B cell (primary cell): ENCODE measurements at regions of chr16 and their contacts with region 1.

Region 1: DNA sequence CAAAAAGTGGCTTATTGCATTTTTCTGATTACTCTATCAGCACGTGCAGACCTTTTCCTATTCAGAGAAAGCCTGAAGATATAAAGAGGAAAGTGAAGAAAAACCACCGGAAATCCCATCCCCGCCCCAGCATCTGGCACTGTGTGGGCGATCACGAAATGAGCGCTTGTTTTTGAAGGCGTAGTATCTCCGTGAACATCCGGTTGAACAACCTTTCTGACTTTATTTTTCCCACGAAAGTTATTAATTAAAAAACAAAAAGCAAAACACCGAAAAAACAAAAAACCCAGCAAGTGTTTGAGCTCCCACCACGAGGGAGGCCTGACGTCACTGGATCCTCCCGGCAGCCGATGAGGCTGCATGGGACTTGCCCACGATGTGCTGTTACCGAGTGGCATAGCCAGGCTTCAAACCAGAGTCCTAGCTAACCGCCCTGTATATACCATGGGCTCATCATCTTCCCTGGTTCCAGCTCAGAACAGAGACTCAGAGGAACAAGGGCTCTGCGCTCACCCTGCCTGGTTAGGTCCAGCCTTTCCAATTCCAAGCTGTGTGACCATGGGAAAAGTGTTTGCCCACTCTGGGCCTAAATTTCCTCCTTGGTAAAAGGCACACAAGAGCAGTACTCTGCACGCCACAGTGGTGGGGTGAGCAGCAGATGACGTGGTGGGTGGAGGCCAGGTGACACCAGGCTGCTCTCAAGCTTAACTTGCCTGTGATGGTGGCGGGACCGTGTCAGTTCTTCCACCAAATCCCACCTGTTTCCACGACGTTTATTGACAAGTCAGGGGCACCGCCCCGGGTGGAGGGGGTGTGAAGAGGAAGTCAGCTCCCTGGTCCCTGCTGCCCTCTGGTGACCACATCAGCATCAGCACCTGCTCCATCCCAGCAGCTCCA is 34.3 kb upstream of the IL21R start:
- DNase-seq: peak; percentile 95
- ATAC-seq: peak; percentile 77
- H3K4me3 ChIP-seq: peak overlapping the region; percentile 11 to 42 (median 30)
- H3K4me3 Mint-ChIP-seq: peak overlapping the region; percentile 78
- H3K27ac ChIP-seq: peak overlapping the region; percentile 97
- H3K27ac Mint-ChIP-seq: peak overlapping the region; percentile 96
- H3K4me1 ChIP-seq: peaks cover 36 to 57% of the 10 kb centered on the region in 2 donors
- H3K4me1 Mint-ChIP-seq: peaks cover 57% of the 10 kb centered on the region
- H3K27me3 ChIP-seq: no peaks in the 10 kb centered on the region
- H3K27me3 Mint-ChIP-seq: no peaks in the 10 kb centered on the region
- CTCF ChIP-seq: peak; percentile 85

Region 2: GRCh38 chr16:27154705-27155521 is 212.8 kb before region 1 on chr16:
- CTCF ChIA-PET with region 1: interaction called, 65 read pairs
- POLR2A ChIA-PET with region 1: interaction called, 3 read pairs
- intact Hi-C with region 1: loop called (anchors 1 kb)
- DNase-seq: peak; percentile 75
- ATAC-seq: peak; percentile 91
- H3K4me3 ChIP-seq: no peak overlapping the region
- H3K4me3 Mint-ChIP-seq: no peak overlapping the region
- H3K27ac ChIP-seq: no peak overlapping the region
- H3K27ac Mint-ChIP-seq: no peak overlapping the region
- H3K4me1 ChIP-seq: peaks cover 9 to 11% of the 10 kb centered on the region in 2 donors
- H3K4me1 Mint-ChIP-seq: peaks cover 13% of the 10 kb centered on the region
- H3K27me3 ChIP-seq: no peaks in the 10 kb centered on the region
- H3K27me3 Mint-ChIP-seq: no peaks in the 10 kb centered on the region
- CTCF ChIP-seq: peak; percentile 99

Region 3: GRCh38 chr16:27225536-27226360 is 142.0 kb before region 1 on chr16:
- CTCF ChIA-PET with region 1: interaction called, 67 read pairs
- POLR2A ChIA-PET with region 1: interaction called, 4 read pairs
- intact Hi-C with region 1: no loop called
- DNase-seq: no peak
- ATAC-seq: no peak
- H3K4me3 ChIP-seq: no peak overlapping the region
- H3K4me3 Mint-ChIP-seq: peak overlapping the region; percentile 12
- H3K27ac ChIP-seq: no peak overlapping the region
- H3K27ac Mint-ChIP-seq: peak overlapping the region; percentile 75
- H3K4me1 ChIP-seq: peaks cover 37 to 51% of the 10 kb centered on the region in 2 donors
- H3K4me1 Mint-ChIP-seq: peaks cover 42% of the 10 kb centered on the region
- H3K27me3 ChIP-seq: no peaks in the 10 kb centered on the region
- H3K27me3 Mint-ChIP-seq: no peaks in the 10 kb centered on the region
- CTCF ChIP-seq: no peak

Region 4: DNA sequence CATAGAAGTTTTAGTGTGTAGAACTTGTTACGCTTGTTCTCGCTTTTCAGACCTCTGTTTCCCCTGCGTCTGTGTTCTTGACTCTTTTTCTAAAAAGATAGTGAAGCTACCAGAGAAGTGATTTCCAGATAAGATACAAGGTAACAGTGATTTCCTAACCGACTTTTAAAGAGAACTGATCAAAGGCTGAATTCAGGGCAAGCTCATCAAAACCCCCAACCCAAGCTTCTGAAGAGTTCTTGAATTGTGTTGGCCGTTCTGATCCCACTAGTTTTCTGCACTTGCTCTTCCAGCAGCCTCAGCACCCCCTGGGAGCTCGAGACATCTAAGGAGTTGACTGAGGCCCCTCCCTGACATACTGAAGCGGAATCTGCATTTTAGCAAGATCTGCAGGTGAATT is 86.5 kb before region 1 on chr16:
- CTCF ChIA-PET with region 1: no interaction called
- POLR2A ChIA-PET with region 1: no interaction called
- intact Hi-C with region 1: no loop called
- DNase-seq: no peak
- ATAC-seq: no peak
- H3K4me3 ChIP-seq: no peak overlapping the region
- H3K4me3 Mint-ChIP-seq: no peak overlapping the region
- H3K27ac ChIP-seq: no peak overlapping the region
- H3K27ac Mint-ChIP-seq: no peak overlapping the region
- H3K4me1 ChIP-seq: peaks cover 21% of the 10 kb centered on the region in 2 donors
- H3K4me1 Mint-ChIP-seq: peaks cover 32% of the 10 kb centered on the region
- H3K27me3 ChIP-seq: no peaks in the 10 kb centered on the region
- H3K27me3 Mint-ChIP-seq: no peaks in the 10 kb centered on the region
- CTCF ChIP-seq: no peak

Region 5: GRCh38 chr16:27346819-27347218 is 20.9 kb before region 1 on chr16:
- CTCF ChIA-PET with region 1: interaction called, 7 read pairs
- POLR2A ChIA-PET with region 1: interaction called, 10 read pairs
- intact Hi-C with region 1: no loop called
- DNase-seq: peak; percentile 52
- ATAC-seq: peak; percentile 76
- H3K4me3 ChIP-seq: no peak overlapping the region
- H3K4me3 Mint-ChIP-seq: peak overlapping the region; percentile 54
- H3K27ac ChIP-seq: peak overlapping the region; percentile 39 to 79
- H3K27ac Mint-ChIP-seq: peak overlapping the region; percentile 89
- H3K4me1 ChIP-seq: peaks cover 21 to 31% of the 10 kb centered on the region in 2 donors
- H3K4me1 Mint-ChIP-seq: peaks cover 33% of the 10 kb centered on the region
- H3K27me3 ChIP-seq: no peaks in the 10 kb centered on the region
- H3K27me3 Mint-ChIP-seq: no peaks in the 10 kb centered on the region
- CTCF ChIP-seq: no peak

Region 6: DNA sequence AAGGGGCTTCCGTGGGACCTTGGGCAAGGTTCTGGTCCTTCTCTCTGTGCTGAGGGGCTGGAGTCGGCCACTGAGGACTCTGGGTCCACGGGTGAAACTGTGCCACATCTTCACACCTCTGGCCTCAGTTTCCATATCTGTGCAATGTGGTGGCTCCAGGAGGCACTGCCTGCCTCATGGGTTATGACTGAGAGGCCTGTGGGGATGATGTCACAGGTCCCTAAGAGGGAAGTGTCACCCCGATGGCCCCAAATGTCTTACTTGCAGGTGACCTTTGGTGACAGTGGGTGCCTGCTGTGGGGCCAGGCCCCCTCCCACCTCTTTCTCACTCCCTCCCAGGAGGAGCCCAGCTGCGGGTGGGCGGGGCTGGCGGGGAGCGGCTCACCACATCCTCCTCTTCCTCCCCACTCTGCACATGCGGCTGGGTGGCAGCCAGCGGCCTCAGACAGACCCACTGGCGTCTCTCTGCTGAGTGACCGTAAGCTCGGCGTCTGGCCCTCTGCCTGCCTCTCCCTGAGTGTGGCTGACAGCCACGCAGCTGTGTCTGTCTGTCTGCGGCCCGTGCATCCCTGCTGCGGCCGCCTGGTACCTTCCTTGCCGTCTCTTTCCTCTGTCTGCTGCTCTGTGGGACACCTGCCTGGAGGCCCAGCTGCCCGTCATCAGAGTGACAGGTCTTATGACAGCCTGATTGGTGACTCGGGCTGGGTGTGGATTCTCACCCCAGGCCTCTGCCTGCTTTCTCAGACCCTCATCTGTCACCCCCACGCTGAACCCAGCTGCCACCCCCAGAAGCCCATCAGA is 34.3 kb after region 1 on chr16 and contains the start of gene IL21R:
- CTCF ChIA-PET with region 1: interaction called, 20 read pairs
- POLR2A ChIA-PET with region 1: interaction called, 20 read pairs
- intact Hi-C with region 1: loop called (anchors 1 kb)
- DNase-seq: peak; percentile 91
- ATAC-seq: peak; percentile 64
- H3K4me3 ChIP-seq: peak within 1 kb of the TSS; percentile 54 to 90 (median 86)
- H3K4me3 Mint-ChIP-seq: peak within 1 kb of the TSS; percentile 98
- H3K27ac ChIP-seq: peak within 1 kb of the TSS; percentile 90 to 96
- H3K27ac Mint-ChIP-seq: peak within 1 kb of the TSS; percentile 97
- H3K4me1 ChIP-seq: peaks cover 83 to 99% of the 10 kb centered on the region in 2 donors
- H3K4me1 Mint-ChIP-seq: peaks cover 90% of the 10 kb centered on the region
- H3K27me3 ChIP-seq: no peaks in the 10 kb centered on the region
- H3K27me3 Mint-ChIP-seq: no peaks in the 10 kb centered on the region
- CTCF ChIP-seq: no peak
- total RNA-seq, gene IL21R: 28.5 and 31.6 TPM in 2 replicates

Region 7: DNA sequence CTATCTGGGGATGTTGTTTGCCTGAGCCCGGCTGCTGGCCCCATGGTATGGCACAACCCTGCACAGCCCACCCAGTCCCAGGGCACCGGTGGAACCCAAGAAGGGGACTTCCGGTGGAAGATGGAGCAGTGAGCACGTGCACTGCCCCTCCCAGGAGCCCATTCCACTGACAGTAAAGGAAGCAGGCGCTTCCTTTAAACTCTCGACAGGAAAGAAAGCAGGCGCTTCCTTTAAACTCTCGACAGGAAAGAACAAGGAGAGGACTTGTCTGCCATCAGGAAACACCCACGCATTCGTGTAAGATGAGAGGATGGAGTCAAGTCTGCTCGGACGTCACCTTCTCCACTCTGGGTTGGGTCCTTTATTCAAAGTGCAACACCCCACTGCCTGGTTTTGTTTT is 88.0 kb after region 1 on chr16:
- CTCF ChIA-PET with region 1: interaction called, 29 read pairs
- POLR2A ChIA-PET with region 1: interaction called, 16 read pairs
- intact Hi-C with region 1: loop called (anchors 2 kb)
- DNase-seq: peak; percentile 36
- ATAC-seq: no peak
- H3K4me3 ChIP-seq: no peak overlapping the region
- H3K4me3 Mint-ChIP-seq: no peak overlapping the region
- H3K27ac ChIP-seq: peak overlapping the region in 1 of 2 donors; percentile 30
- H3K27ac Mint-ChIP-seq: no peak overlapping the region
- H3K4me1 ChIP-seq: peaks cover 30 to 49% of the 10 kb centered on the region in 2 donors
- H3K4me1 Mint-ChIP-seq: peaks cover 55% of the 10 kb centered on the region
- H3K27me3 ChIP-seq: no peaks in the 10 kb centered on the region
- H3K27me3 Mint-ChIP-seq: no peaks in the 10 kb centered on the region
- CTCF ChIP-seq: no peak